A549 (cell line): ENCODE measurements at regions of chr10 and their contacts with region 1.

Region 1: DNA sequence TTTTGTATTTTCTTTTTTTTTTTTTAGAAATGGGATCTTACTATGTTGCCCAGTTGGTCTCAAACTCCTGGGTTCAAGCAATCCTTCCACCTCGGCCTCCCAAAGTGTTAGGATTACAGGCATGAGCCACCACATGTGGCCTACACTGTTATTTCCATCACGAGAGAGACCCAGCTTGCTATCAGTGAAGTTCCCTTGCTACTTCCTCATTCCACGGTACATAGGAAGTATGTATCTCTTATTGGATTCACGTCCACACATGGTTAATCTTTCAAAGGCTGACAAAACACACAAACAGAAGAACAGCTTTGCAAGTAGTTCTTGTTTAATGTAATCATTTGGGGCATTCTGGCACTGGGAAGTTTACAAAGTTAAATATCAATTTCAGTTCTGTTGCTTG is 50.9 kb downstream of the DCLRE1A start:
- DNase-seq: no peak
- ATAC-seq: no peak
- H3K4me3 ChIP-seq: no peak overlapping the region
- H3K27ac ChIP-seq: no peak overlapping the region
- H3K4me1 ChIP-seq: no peaks in the 10 kb centered on the region
- CTCF ChIP-seq: no peak
- EP300 ChIP-seq: no peak
- POLR2A ChIP-seq: no peak
- RAD21 ChIP-seq: no peak

Region 2: DNA sequence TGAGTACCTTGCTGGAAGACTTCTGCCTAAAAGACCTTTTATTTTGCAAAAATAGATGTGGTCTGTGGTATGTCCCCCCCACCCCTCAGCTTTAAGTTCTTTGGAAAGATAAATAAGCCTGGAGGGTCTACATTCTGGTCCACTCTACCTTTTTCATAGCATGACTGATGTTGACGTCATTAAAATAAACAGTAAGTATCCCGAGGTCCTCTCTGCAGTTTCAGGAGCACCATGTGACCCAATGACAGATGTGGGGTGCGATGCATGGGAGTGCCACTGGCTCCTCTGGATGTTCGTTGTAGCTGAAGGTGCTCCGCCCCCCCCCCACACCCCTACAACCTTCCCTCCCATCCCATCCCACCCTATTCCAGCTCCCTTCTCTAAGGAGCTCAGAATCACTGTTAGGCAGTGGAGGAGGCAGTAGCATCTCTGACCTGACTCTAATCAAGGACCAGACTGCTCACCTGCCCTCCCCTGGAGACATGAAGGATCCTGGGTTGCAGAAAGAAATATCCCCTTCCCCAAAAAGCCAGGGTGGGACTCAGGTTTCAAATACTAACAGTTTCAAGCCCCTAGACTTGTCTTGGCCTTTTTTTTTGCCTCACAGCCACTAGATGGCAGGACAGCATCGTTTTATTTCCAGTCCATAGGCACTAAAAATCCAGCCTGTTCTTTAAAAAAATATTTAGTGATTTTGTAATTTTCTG is 98.2 kb before region 1 on chr10:
- CTCF ChIA-PET with region 1: interaction called, 14 read pairs
- POLR2A ChIA-PET with region 1: no interaction called
- DNase-seq: peak; percentile 20 to 49
- ATAC-seq: peak; percentile 61 to 89; a peak in 4 of 6 replicates
- H3K4me3 ChIP-seq: no peak overlapping the region
- H3K27ac ChIP-seq: no peak overlapping the region
- H3K4me1 ChIP-seq: peaks cover 25% of the 10 kb centered on the region
- CTCF ChIP-seq: peak; percentile 87
- EP300 ChIP-seq: no peak
- POLR2A ChIP-seq: no peak
- RAD21 ChIP-seq: peak; percentile 80 to 82

Region 3: DNA sequence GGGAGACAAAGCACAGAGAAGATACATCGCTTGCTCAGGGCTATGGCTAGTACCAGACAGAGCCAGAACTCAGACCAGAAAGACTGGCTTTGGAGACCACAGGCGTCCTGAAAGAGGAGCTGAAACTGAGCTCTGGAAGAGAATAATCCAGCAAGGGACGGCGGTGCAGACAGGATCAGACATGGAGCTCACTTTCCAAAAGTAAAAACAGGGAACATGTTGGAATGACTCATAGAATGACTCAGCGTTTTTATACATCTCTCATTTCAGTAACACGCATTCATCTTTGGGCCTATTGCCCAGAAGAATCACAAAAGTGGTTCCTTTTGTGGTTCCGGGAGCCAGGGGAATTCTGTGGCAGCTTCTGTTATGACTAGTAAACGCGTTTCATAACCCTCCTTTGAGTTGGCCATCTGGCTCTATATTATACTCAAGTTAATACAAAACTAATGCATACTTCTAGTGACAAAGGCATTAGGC is 14.4 kb before region 1 on chr10:
- CTCF ChIA-PET with region 1: interaction called, 18 read pairs
- POLR2A ChIA-PET with region 1: no interaction called
- DNase-seq: peak; percentile 44 to 80
- ATAC-seq: peak; percentile 63 to 85
- H3K4me3 ChIP-seq: no peak overlapping the region
- H3K27ac ChIP-seq: peak overlapping the region; percentile 83 to 89
- H3K4me1 ChIP-seq: peaks cover 22% of the 10 kb centered on the region
- CTCF ChIP-seq: no peak
- EP300 ChIP-seq: peak in 1 of 2 experiments; percentile 35; a peak in 1 of 5 replicates
- POLR2A ChIP-seq: no peak
- RAD21 ChIP-seq: no peak

Region 4: DNA sequence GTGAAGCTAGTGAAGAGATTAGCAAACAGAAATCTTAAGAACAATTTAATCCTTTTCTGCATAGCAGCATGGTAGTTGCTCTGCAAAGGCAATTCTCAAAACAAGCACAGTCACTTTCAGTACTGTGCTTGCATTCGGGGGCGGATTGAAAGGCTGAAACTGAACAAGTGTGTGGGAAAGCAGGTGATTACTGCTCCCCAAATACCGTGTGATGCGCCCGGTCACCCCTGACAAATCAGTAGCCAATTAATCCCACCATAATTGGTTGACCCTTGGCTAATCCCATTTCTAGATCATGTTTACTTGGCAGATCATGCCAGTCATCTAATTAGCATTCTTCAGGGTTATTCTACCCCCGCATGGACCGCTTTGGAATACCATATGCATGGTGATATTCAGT is 164.1 kb after region 1 on chr10:
- CTCF ChIA-PET with region 1: no interaction called
- POLR2A ChIA-PET with region 1: no interaction called
- DNase-seq: no peak
- ATAC-seq: no peak
- H3K4me3 ChIP-seq: no peak overlapping the region
- H3K27ac ChIP-seq: no peak overlapping the region
- H3K4me1 ChIP-seq: no peaks in the 10 kb centered on the region
- CTCF ChIP-seq: no peak
- EP300 ChIP-seq: no peak
- POLR2A ChIP-seq: no peak
- RAD21 ChIP-seq: no peak

Region 5: DNA sequence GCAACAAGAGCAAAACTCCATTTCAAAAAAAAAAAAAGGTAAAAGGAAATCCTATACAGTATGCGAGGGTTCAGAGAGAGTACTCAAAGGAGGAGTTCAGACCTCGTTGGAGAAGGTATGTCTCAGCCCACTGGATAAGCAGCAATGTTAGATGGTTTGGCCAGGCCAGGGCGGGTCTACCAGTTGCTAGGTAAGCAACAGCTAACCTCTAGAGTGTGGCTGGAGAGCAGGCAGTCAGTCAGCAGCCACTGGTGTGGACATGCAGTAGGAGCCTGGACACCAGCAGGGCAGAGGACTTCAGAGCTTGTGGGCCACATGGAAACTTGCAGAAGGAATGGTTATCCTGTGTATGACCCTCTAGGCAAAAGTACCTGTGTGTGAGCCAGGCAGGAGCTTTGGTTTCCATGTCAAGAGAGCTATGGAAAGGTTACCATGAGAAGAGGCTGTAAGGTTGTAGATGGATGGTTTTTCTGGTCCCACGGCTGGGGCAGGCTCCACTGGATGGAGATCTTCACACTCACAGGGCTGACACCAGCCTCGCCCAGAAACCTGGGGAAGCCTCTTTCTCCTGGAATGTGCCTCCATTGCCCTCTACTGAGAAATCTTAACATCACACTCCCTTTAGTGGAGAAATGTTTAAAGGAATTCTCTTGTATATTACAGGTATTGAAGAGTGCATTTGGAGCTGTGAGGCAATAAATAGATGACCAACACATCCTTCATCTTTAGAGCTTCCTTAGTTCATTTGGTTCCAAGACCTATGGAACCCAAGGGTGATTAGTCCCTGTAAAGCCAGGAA is 307.4 kb after region 1 on chr10:
- CTCF ChIA-PET with region 1: interaction called, 195 read pairs
- POLR2A ChIA-PET with region 1: no interaction called
- DNase-seq: peak; percentile 30 to 36
- ATAC-seq: peak; percentile 88 to 90
- H3K4me3 ChIP-seq: no peak overlapping the region
- H3K27ac ChIP-seq: no peak overlapping the region
- H3K4me1 ChIP-seq: no peaks in the 10 kb centered on the region
- CTCF ChIP-seq: peak; percentile 46
- EP300 ChIP-seq: no peak
- POLR2A ChIP-seq: no peak
- RAD21 ChIP-seq: peak; percentile 61 to 77